GM12878 (cell line): ENCODE measurements at regions of chr20 and their contacts with region 1.

Region 1: GRCh38 chr20:13819885-13820645 is 35.2 kb downstream of the NDUFAF5 start:
- DNase-seq: no peak
- ATAC-seq: peak; percentile 92
- H3K4me3 ChIP-seq: no peak overlapping the region
- H3K27ac ChIP-seq: no peak overlapping the region
- H3K4me1 ChIP-seq: no peaks in the 10 kb centered on the region; the same call in 1 of the 2 replicates
- H3K27me3 ChIP-seq: no peaks in the 10 kb centered on the region
- CTCF ChIP-seq: peak; percentile 52 to 57 (median 56)
- EP300 ChIP-seq: no peak
- POLR2A ChIP-seq: no peak
- RAD21 ChIP-seq: peak; percentile 47

Region 2: DNA sequence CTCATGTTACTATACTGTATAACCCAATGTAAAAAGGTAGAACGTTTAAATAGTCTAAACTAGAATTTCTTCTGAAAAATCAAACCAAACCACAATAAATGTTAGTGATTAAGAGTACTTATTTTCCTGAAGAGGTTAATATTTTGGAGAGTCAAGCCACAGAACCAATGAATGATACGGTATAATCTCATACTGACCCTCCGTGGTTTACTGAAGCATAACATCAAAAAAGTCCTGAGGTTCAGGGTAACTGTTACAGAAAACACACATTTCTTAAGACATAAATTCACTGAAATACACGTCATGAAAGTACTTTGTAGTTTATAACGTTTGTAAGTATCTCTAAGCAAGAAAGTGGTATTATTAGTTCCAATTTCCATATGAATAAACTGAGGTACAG is 64.3 kb before region 1 on chr20:
- CTCF ChIA-PET with region 1: no interaction called
- POLR2A ChIA-PET with region 1: no interaction called
- RAD21 ChIA-PET with region 1: no interaction called
- SMC1A ChIA-PET with region 1: no interaction called
- in situ Hi-C with region 1: no loop called
- intact Hi-C with region 1: no loop called
- DNase-seq: no peak
- ATAC-seq: no peak
- H3K4me3 ChIP-seq: no peak overlapping the region
- H3K27ac ChIP-seq: no peak overlapping the region
- H3K4me1 ChIP-seq: no peaks in the 10 kb centered on the region; the same call in 1 of the 2 replicates
- H3K27me3 ChIP-seq: no peaks in the 10 kb centered on the region
- CTCF ChIP-seq: no peak
- EP300 ChIP-seq: no peak
- POLR2A ChIP-seq: no peak
- RAD21 ChIP-seq: no peak

Region 3: GRCh38 chr20:13953227-13953626 is 133.2 kb after region 1 on chr20:
- CTCF ChIA-PET with region 1: interaction called, 3 read pairs
- POLR2A ChIA-PET with region 1: no interaction called
- RAD21 ChIA-PET with region 1: no interaction called
- SMC1A ChIA-PET with region 1: no interaction called
- in situ Hi-C with region 1: no loop called
- intact Hi-C with region 1: loop called (anchors 5 kb)
- DNase-seq: no peak
- ATAC-seq: no peak
- H3K4me3 ChIP-seq: no peak overlapping the region
- H3K27ac ChIP-seq: no peak overlapping the region
- H3K4me1 ChIP-seq: no peaks in the 10 kb centered on the region
- H3K27me3 ChIP-seq: no peaks in the 10 kb centered on the region
- CTCF ChIP-seq: peak; percentile 1 to 35 (median 30); a peak in 1 of 6 replicates
- EP300 ChIP-seq: no peak
- POLR2A ChIP-seq: no peak
- RAD21 ChIP-seq: no peak

Region 4: GRCh38 chr20:14062786-14063185 is 242.7 kb after region 1 on chr20:
- CTCF ChIA-PET with region 1: interaction called, 20 read pairs
- POLR2A ChIA-PET with region 1: no interaction called
- RAD21 ChIA-PET with region 1: no interaction called
- SMC1A ChIA-PET with region 1: interaction called, 4 read pairs
- in situ Hi-C with region 1: loop called (anchors 5 kb)
- intact Hi-C with region 1: no loop called
- DNase-seq: no peak
- ATAC-seq: no peak
- H3K4me3 ChIP-seq: no peak overlapping the region
- H3K27ac ChIP-seq: no peak overlapping the region
- H3K4me1 ChIP-seq: no peaks in the 10 kb centered on the region
- H3K27me3 ChIP-seq: peaks cover 1 to 3% of the 10 kb centered on the region in 2 experiments; a peak in 1 of 4 replicates
- CTCF ChIP-seq: no peak
- EP300 ChIP-seq: no peak
- POLR2A ChIP-seq: no peak
- RAD21 ChIP-seq: no peak